Activated CD4-positive, alpha-beta T cell treated with anti-CD3 and anti-CD28 coated beads, Interleukin-2, amount 10 ng/mL, durations not matched to agents 7 days and 5 days (primary cell): ENCODE measurements at regions of chr6 and their contacts with region 1.

Region 1: DNA sequence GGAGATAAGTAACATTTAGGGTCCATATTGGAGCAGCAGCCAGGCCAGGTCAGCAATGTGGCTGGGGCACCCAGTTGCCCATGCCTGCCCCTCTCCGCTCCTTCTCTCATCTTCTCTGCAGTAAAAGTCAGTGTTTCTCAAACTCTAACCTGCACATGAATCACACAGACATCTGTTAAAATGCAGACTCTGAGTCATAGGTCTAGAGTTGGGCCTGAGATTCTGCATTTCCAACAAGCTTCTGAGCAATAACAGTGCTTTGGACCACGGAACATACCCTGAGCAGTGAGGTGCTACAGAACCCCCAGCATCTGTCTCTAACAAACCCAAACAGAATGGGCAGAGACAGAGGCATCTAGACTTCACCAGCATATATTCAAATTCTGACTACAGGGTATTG is 10.1 kb downstream of the PHF10 start:
- DNase-seq: no peak
- H3K4me3 Mint-ChIP-seq: no peak overlapping the region
- H3K27ac Mint-ChIP-seq: no peak overlapping the region
- H3K4me1 Mint-ChIP-seq: peaks cover 4% of the 10 kb centered on the region
- H3K27me3 Mint-ChIP-seq: no peaks in the 10 kb centered on the region

Region 2: DNA sequence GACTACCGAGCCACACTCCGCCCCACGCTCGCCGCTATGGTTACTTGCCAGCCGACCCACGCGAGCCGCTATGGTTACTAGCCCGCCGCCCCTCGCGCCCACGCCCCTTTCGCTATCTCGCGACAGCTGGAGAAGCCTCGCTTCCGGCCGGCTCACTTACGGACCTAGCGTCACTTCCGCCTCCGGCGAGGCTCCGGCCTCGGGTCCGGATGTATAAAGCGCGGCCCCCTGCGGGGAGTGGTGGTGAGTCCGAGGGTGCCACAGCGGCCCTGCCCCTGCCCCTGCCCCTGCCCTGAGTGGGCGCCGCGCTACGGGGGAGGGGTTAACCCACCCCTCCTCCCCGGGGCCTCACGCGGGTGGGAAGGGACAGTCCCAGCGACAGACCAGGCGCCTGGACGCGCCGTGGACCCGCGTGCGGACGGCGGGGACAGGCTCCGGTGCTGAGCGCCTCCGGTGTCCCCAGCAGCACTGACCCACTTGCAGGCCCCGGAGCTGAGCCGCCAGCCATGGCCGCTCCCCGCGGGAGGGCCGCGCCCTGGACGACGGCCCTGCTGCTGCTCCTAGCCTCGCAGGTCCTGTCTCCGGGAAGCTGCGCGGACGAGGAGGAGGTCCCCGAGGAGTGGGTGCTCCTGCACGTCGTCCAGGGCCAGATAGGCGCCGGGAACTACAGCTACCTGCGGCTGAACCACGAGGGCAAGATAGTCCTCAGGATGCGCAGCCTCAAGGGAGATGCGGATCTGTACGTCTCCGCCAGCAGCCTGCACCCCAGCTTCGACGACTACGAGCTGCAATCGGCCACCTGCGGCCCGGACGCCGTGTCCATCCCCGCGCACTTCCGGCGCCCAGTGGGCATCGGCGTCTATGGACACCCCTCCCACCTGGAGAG is 12.0 kb before region 1 on chr6 and contains the starts of genes C6orf120 and WDR27:
- CTCF ChIA-PET with region 1: interaction called, 11 read pairs
- POLR2A ChIA-PET with region 1: interaction called, 3 read pairs
- DNase-seq: peak; percentile 97
- H3K4me3 Mint-ChIP-seq: peak within 1 kb of the TSS; percentile 87
- H3K27ac Mint-ChIP-seq: peak within 1 kb of the TSS; percentile 93
- H3K4me1 Mint-ChIP-seq: peaks cover 49% of the 10 kb centered on the region
- H3K27me3 Mint-ChIP-seq: no peaks in the 10 kb centered on the region
- total RNA-seq, gene C6orf120: 17.0 to 20.9 TPM
- total RNA-seq, gene WDR27: 18.1 to 21.9 TPM